Right ventricle myocardium inferior (tissue), 1 donor: ENCODE measurements at regions of chrX and their contacts with region 1.

Region 1: DNA sequence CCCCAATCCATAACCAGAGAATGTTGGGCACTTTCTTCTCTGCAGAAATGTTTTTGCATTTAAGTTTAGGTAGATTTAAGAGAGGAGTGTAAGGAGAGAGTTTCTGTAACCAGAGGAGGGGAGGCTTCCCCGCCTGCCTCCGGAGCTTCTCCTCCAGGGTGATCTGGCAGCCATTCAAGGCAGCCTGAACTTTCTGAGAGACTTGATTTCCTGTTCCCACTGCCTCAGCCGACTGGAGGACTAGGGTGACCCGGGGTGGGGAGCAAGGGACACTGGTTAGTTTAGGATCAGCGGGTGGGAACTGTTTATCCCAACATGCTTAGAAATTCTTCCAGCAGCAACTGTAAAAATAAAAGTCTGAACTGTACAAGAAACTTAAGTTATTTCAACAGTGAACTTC is 15.1 kb downstream of the FAM9C start:
- DNase-seq: no peak
- ATAC-seq: peak; percentile 48

Region 2: DNA sequence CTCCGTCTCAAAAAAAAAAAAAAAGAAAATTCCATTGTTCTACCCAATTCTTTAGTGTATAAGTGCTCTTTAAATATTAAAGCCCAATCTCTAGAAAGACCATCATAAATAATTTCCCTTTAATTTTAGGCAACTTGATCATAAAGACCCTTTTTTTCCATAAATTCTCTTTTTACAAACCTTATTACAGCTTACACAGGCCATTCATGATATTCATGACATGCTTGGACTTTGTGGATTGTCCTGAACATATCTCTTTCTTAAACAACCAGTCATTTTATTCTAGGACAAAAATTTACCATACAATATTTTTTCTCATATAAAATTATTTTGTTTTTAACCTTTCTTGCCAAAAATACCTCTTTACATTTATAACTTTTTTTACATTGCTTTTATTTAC is 92.4 kb before region 1 on chrX:
- intact Hi-C with region 1: no loop called
- DNase-seq: no peak
- ATAC-seq: no peak

Region 3: GRCh38 chrX:12994276-12994675 is 35.1 kb before region 1 on chrX:
- intact Hi-C with region 1: loop called (anchors 5 kb)
- DNase-seq: no peak
- ATAC-seq: no peak

Region 4: GRCh38 chrX:13078739-13079444 is 49.6 kb after region 1 on chrX:
- intact Hi-C with region 1: no loop called
- DNase-seq: peak; percentile 60
- ATAC-seq: peak; percentile 83